Posterior cingulate gyrus (tissue), 11 donors: ENCODE measurements at regions of chr20 and their contacts with region 1.

Region 1: DNA sequence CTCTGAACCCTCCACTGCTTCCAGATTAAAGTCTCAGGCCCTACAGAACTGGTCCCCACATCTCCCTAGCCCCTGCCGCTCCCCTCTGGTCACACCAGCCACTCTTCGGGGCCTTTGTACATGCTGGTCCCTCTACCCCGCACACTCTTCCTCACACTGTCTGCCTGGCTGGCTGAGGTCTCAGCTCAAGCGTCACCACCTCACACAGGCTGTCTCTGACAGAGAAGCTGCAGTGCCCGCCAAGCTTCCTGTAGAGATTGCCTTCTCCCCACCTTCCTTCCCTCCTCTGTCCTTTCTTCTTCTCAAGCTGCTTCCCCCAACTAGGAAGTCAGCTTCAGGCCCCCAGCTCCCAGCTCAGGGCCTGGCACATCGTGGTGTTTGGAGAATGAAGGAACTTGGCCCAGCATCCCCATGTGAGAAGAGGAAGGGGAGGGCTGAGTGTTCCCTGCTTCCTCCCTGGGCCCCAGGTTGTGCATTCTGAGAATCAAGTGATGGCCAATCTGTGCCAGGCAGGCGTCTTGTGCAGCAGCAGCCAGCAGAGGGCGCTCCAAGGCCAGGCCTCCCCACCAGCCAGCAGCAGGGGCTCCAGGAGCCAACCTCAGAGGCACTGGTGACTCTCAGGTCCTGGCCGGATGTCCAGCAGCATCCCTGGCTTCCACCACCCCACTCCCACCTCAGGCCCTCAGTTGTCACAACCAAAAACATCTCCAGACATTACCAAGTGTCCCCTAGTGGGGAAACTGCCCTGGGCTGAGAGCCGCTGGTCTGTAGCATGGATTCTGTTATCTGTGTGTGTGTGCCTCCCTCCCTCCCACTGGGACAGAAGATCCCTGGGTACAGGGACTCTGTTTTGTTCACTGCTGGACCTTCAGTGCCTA is 192.1 kb downstream of the PREX1 start:
- DNase-seq: peak; percentile 57 to 97 (median 85)

Region 2: DNA sequence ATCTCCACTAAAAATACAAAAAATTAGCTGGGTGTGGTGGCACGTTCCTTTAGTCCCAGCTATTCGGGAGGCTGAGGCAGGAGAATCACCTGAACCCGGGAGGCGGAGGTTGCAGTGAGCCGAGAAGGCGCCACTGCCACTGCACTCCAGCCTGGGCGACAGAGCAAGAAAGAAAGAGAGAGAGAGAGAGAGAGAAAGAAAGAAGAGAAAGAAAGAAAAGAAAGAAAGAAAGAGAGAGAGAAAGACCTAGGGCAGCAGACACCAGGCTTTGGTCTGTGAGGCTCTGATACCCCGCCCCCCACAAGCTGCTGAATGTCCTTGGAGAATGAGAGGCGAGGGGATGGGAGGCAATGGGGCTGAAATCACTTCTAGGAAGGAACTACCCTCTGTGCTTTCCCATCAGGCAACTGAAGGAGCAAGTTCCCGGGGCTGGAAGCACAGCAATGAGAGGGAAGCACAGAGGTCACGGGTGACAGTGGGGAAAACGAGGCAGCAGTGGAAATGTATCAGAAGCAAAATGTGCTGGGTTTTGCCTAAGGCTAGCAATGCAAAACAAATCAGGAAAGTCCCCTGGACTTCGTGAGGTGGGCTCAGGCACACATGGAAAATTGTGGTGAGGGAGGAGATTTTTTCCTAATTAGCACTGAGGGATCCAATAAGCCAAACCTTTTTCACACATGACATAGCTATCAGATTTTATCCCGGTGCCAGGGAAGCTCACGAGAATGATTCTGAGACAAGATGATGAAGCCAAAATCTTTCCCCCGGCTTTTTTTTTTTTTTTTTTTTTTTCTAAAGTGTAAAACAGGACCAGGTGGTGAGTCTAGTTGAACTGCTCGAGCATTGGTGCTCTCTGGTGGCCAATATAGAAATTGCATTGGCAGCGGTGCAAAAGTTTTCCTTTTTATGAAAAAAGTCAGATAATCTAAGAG is 269.0 kb after region 1 on chr20:
- intact Hi-C with region 1: loop called (anchors 1 kb)
- DNase-seq: peak in 8 of 10 donors; percentile 29 to 91 (median 70)